Natural killer cell (primary cell): ENCODE measurements at regions of chr15 and their contacts with region 1.

Region 1: DNA sequence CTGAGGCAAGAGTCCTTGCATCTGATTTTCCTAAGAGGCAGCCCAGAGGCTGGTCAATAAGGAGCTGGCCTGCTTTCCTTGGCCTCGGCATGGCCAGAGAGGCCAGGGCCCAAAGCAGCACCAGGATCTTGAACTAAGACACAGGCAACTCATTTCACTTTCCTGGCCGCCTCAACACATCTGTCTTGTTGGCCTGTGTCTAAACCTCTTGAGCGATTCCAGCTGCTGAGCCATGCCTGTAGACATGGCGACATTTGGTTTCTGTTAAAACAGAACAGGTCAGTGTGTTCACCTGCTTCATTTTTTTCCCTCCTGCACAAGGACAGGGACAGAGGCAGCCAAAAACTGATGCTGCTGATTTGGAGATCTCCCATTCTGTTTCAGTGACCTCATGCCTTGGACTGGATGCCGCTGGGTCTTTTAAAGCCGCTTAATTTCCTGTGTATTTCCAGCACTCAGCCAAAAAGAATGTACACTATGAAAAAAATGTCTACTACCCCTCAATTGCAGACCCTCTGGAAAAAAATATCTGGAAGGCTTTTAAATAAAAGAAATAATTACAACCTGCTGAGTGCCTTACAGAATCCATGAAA is 266.6 kb upstream of the ICE2 start:
- DNase-seq: no peak
- ATAC-seq: no peak
- H3K4me3 ChIP-seq: no peak overlapping the region
- H3K4me3 Mint-ChIP-seq: no peak overlapping the region
- H3K27ac ChIP-seq: no peak overlapping the region
- H3K27ac Mint-ChIP-seq: no peak overlapping the region
- H3K4me1 ChIP-seq: peaks cover 12% of the 10 kb centered on the region
- H3K4me1 Mint-ChIP-seq: peaks cover 19 to 22% of the 10 kb centered on the region in 2 donors
- H3K27me3 ChIP-seq: no peaks in the 10 kb centered on the region
- H3K27me3 Mint-ChIP-seq: no peaks in the 10 kb centered on the region
- CTCF ChIP-seq: no peak

Region 2: DNA sequence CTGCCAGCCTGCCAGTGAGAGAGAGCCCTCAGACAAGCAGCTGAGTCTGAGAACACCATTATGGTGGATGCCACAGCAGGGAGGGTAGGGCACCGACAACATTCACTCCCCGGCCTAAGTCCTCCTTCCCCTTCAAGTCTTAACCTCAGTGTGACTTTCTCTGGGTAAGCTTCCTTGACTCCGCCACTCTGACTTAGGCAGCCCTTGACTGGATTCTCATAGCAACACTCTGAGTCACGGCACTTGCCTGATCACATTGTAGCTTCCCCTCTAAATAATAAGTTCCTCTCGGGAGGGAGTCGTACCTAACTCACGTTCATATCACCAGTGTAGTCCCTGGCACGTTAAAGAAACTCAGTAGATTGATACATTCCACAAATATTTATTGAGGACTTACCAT is 561.0 kb before region 1 on chr15:
- intact Hi-C with region 1: no loop called
- DNase-seq: no peak
- ATAC-seq: no peak
- H3K4me3 ChIP-seq: no peak overlapping the region
- H3K4me3 Mint-ChIP-seq: no peak overlapping the region
- H3K27ac ChIP-seq: no peak overlapping the region
- H3K27ac Mint-ChIP-seq: no peak overlapping the region
- H3K4me1 ChIP-seq: no peaks in the 10 kb centered on the region
- H3K4me1 Mint-ChIP-seq: no peaks in the 10 kb centered on the region
- H3K27me3 ChIP-seq: no peaks in the 10 kb centered on the region
- H3K27me3 Mint-ChIP-seq: peaks cover 14 to 62% of the 10 kb centered on the region in 2 donors
- CTCF ChIP-seq: no peak

Region 3: DNA sequence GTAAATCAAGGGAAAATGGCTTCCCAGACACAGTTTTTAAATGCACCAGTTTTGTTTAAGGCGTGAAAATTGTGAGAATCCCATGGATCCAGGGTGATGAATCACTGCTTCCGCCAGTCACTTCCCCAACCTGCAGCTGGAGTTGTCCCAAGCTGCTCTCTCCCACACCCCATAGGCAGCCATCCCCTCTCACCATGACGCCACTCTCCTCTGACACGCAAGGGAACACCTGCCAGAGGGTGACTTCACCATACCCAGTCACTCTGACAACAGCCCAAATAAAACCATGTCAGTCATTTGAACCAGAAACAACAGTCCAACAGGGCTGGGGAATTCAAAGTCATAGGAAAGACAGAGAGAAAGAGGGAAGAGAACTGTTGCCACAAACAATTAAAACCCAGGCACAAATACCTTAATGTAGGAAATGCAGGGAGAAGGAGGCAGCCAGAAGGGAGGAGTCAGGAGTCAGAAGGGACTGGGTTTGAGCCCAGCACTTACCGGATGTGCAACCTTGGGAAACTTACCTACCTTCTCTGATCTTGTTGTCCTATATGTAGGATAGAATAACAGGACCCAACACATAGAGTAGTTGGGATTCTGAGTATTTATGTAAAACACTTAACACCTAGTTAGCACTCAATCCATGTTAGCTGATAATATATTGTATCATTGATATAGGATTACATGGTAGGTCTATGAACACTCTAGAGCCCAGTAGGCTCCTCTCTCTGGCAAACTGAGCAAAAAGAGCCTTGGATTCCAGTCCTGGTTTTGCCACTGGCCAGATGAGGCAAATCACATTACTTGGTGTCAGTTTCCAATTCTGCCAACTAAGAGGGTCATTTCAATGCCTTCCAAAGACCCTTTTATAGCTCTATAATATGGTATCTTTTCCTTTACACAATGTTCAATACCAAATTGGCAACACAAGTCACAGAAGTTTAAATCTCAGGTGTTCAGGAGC is 59.7 kb after region 1 on chr15:
- intact Hi-C with region 1: loop called (anchors 10 kb)
- DNase-seq: no peak
- ATAC-seq: no peak
- H3K4me3 ChIP-seq: no peak overlapping the region
- H3K4me3 Mint-ChIP-seq: no peak overlapping the region
- H3K27ac ChIP-seq: no peak overlapping the region
- H3K27ac Mint-ChIP-seq: no peak overlapping the region
- H3K4me1 ChIP-seq: peaks cover 12% of the 10 kb centered on the region
- H3K4me1 Mint-ChIP-seq: peaks cover 42 to 54% of the 10 kb centered on the region in 2 donors
- H3K27me3 ChIP-seq: no peaks in the 10 kb centered on the region
- H3K27me3 Mint-ChIP-seq: peaks cover 0 to 5% of the 10 kb centered on the region in 2 donors
- CTCF ChIP-seq: no peak